ENCODE measurements at regions of chr6 and their contacts with region 1.

Region 1: GRCh38 chr6:42745707-42746462 is at the start of gene TBCC:
- DNase-seq: peak; percentile 94 to 97
- H3K4me3 ChIP-seq: peak within 1 kb of the TSS; percentile 58
- H3K4me3 Mint-ChIP-seq: peak within 1 kb of the TSS; percentile 83
- H3K27ac Mint-ChIP-seq: peak within 1 kb of the TSS; percentile 95
- H3K4me1 ChIP-seq: peaks cover 15% of the 10 kb centered on the region
- H3K4me1 Mint-ChIP-seq: peaks cover 6% of the 10 kb centered on the region
- H3K27me3 ChIP-seq: no peaks in the 10 kb centered on the region
- H3K27me3 Mint-ChIP-seq: no peaks in the 10 kb centered on the region
- CTCF ChIP-seq: no peak
- total RNA-seq, gene TBCC: 17.0 and 20.4 TPM in 2 replicates

Region 2: DNA sequence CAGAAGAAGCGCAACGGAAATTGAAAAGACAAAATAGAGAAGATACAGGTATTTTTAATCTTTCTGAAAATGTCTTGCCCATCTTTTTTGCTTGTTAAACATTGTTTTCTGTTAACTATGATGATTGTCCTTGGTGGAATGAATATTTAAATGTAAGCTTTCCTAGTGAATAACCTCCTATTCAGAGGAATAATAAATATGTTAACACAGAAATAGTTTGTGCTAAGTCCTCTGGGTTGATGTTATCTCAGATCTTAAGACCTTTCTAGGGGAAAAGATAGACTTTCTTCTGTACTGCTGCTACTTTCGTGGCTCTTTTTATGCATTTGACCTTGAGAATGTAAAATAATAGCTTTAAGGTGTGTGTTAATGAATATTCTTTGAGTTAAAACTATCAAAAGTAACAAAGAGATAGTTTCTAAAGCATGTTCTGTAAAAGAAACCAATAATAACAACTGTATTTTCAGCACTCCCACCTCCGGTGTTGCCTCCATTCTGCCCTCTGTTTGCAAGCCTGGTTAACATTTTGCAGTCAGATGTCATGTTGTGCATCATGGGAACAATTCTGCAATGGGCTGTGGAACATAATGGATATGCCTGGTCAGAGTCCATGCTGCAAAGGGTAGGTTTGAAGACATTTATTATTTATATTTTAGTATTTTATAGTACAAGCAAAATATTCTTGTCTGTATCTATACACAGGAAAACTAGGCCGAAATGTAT is 93.7 kb before region 1 on chr6:
- CTCF ChIA-PET with region 1: no interaction called
- POLR2A ChIA-PET with region 1: no interaction called
- intact Hi-C with region 1: no loop called
- DNase-seq: no peak
- H3K4me3 ChIP-seq: no peak overlapping the region
- H3K4me3 Mint-ChIP-seq: no peak overlapping the region
- H3K27ac Mint-ChIP-seq: no peak overlapping the region
- H3K4me1 ChIP-seq: no peaks in the 10 kb centered on the region
- H3K4me1 Mint-ChIP-seq: no peaks in the 10 kb centered on the region
- H3K27me3 ChIP-seq: no peaks in the 10 kb centered on the region
- H3K27me3 Mint-ChIP-seq: no peaks in the 10 kb centered on the region
- CTCF ChIP-seq: no peak

Region 3: DNA sequence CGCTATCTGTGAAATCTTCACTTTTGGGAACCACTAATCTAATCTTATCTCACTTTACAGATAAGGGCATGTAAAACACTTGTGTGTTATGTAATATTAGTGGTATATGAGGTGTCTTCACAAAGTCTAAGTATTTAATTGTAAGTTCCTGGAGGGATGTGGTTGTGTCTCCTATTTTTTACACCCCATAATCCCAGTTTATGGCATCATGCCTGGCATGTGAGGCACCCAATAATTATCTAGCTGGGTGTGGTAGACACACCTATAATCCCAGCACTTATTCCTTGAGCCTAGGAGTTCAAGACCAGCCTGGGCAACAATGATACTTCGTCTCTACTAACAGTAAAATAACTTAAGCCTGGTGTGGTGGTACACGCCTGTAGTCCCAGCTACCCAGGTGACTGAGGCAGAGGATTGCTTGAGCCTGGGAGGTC is 16.6 kb after region 1 on chr6:
- CTCF ChIA-PET with region 1: no interaction called
- POLR2A ChIA-PET with region 1: interaction called, 4 read pairs
- intact Hi-C with region 1: loop called (anchors 2 kb)
- DNase-seq: peak in 1 of 2 experiments; percentile 16
- H3K4me3 ChIP-seq: no peak overlapping the region
- H3K4me3 Mint-ChIP-seq: no peak overlapping the region
- H3K27ac Mint-ChIP-seq: no peak overlapping the region
- H3K4me1 ChIP-seq: peaks cover 15% of the 10 kb centered on the region
- H3K4me1 Mint-ChIP-seq: peaks cover 6% of the 10 kb centered on the region
- H3K27me3 ChIP-seq: no peaks in the 10 kb centered on the region
- H3K27me3 Mint-ChIP-seq: no peaks in the 10 kb centered on the region
- CTCF ChIP-seq: no peak

Region 4: GRCh38 chr6:42782622-42783176 is 36.8 kb after region 1 on chr6:
- CTCF ChIA-PET with region 1: interaction called, 5 read pairs
- POLR2A ChIA-PET with region 1: interaction called, 52 read pairs
- intact Hi-C with region 1: loop called (anchors 1 kb)
- DNase-seq: peak; percentile 73 to 80
- H3K4me3 ChIP-seq: peak overlapping the region; percentile 88
- H3K4me3 Mint-ChIP-seq: peak overlapping the region; percentile 94
- H3K27ac Mint-ChIP-seq: peak overlapping the region; percentile 99
- H3K4me1 ChIP-seq: peaks cover 31% of the 10 kb centered on the region
- H3K4me1 Mint-ChIP-seq: no peaks in the 10 kb centered on the region
- H3K27me3 ChIP-seq: no peaks in the 10 kb centered on the region
- H3K27me3 Mint-ChIP-seq: no peaks in the 10 kb centered on the region
- CTCF ChIP-seq: no peak

Region 5: DNA sequence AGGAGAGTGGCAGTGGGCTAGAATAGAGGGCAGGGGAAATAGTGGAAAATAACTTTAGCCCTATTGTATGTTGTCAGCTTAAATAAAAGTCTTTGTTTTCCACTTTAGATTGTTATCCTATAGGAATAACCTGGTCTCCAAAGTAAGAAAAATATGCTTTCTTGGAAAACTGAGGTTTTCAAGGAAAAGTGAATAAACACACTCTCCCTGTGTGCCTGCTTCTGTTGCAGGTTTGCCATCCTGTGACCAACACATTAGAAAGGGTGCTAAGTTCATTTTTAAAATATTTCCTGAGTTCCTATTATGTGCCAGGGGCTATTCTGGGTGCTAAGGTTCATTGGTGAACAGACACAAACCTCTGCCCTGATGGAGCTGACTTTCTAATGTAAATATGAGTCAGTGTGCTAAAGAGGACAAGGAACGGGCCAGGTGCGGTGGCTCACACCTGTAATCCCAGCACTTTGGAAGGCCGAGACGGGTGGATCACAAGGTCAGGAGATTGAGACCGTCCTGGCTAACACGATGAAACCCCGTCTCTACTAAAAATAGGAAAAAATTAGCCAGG is 59.5 kb after region 1 on chr6:
- CTCF ChIA-PET with region 1: no interaction called
- POLR2A ChIA-PET with region 1: no interaction called
- intact Hi-C with region 1: no loop called
- DNase-seq: no peak
- H3K4me3 ChIP-seq: no peak overlapping the region
- H3K4me3 Mint-ChIP-seq: no peak overlapping the region
- H3K27ac Mint-ChIP-seq: no peak overlapping the region
- H3K4me1 ChIP-seq: no peaks in the 10 kb centered on the region
- H3K4me1 Mint-ChIP-seq: no peaks in the 10 kb centered on the region
- H3K27me3 ChIP-seq: no peaks in the 10 kb centered on the region
- H3K27me3 Mint-ChIP-seq: no peaks in the 10 kb centered on the region
- CTCF ChIP-seq: no peak

Region 6: DNA sequence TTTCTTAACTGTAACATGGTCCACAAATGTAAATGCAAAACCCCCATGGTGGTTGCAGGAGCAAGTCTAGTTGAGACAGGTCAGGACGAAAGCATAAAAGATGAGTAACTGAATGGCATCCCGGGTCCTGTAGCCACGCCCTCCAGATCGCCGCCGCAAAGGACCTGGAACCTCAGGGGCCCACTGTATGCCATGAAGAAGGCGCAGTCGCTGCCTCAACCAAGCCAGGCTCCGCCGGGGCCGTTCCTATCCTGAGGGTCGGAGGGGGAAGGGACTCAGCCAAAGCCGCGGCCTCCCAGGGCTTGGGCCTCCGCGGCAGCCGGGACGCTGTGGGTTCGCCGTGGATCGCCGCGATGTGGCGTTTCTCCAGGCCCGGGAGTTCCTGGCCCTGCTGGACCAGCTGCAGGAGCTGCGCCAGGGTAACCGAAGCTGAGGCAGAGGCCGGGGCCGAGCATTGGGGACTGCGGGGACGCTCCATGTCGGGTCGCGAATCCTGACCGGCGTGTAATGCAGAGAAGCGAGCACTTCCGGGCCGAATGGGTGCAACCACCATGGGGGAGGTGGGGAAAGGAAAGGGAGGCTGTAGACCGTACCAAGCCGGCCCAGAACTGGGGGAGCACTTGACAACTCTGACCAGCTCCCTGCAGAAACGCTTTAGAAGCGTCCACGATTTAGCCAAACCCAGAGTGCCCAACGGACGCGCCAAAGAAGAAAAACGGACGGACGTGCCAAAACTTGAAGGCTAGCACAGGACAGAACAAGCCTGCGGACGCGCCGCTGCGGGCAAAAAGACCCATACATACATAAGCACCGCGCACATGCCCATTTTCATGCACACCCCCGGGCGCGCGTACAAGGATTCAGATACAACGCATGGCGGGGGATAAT is 144.7 kb after region 1 on chr6:
- CTCF ChIA-PET with region 1: interaction called, 3 read pairs
- POLR2A ChIA-PET with region 1: interaction called, 4 read pairs
- intact Hi-C with region 1: loop called (anchors 5 kb)
- DNase-seq: peak; percentile 95 to 96
- H3K4me3 ChIP-seq: peak overlapping the region; percentile 73
- H3K4me3 Mint-ChIP-seq: peak overlapping the region; percentile 94
- H3K27ac Mint-ChIP-seq: peak overlapping the region; percentile 89
- H3K4me1 ChIP-seq: 0 out of 2 replicates have a peak, but pooled peaks cover 5% of the 10 kb centered on the region
- H3K4me1 Mint-ChIP-seq: peaks cover 15% of the 10 kb centered on the region
- H3K27me3 ChIP-seq: no peaks in the 10 kb centered on the region
- H3K27me3 Mint-ChIP-seq: no peaks in the 10 kb centered on the region
- CTCF ChIP-seq: no peak

Region 7: DNA sequence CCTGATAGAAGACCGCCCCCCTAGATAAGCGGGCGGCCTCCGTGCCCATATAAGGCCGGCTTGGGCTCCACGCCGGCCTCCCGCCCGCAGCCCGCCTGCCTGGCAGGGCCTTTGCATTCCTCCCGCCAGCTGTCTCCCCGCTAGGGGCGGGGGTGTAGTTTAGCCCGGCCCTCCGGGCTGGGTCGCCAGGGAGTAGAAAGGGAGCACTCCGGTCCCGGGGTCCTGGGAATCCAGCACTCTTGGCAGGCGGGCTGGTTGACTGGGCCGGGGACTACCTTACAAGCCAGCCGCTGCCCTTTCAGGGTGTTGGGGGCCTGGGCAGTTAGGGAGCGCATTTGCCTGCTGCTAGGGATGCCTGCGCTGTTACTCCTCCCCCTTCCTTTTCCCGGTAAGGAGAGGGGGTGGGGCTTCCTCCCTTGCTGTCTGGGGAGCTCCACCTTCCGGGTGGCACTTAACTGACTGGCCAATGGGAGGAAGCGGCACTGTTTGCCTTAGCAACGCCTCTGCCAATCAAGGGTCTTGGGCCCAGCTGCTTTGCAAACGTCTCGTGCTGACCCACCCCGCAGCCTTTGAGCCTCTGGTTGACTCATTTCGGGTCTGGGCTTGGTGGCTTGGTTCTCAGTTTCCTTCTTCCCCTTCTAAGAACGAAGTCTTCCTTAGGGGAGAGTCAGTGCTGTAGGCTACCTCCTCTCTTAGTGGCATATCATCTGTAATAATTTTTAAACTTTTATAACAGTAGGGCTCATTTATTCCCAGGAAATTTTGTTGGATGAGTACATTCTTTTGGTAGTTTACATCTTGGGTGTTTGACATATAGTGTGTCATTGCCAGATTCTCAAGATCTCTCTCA is 428.6 kb after region 1 on chr6:
- CTCF ChIA-PET with region 1: interaction called, 5 read pairs
- POLR2A ChIA-PET with region 1: no interaction called
- intact Hi-C with region 1: loop called (anchors 1 kb)
- DNase-seq: peak; percentile 86 to 93
- H3K4me3 ChIP-seq: no peak overlapping the region
- H3K4me3 Mint-ChIP-seq: no peak overlapping the region
- H3K27ac Mint-ChIP-seq: no peak overlapping the region
- H3K4me1 ChIP-seq: peaks cover 25% of the 10 kb centered on the region; the same call in 1 of the 2 replicates
- H3K4me1 Mint-ChIP-seq: peaks cover 12% of the 10 kb centered on the region
- H3K27me3 ChIP-seq: no peaks in the 10 kb centered on the region
- H3K27me3 Mint-ChIP-seq: no peaks in the 10 kb centered on the region
- CTCF ChIP-seq: no peak

Measured in Caco-2 (cell line).